ENCODE measurements at regions of chr2 and their contacts with region 1.

Region 1: GRCh38 chr2:37635504-37636380 is 35.7 kb downstream of the CDC42EP3 start:
- DNase-seq: peak; percentile 85
- ATAC-seq: peak; percentile 85
- H3K4me3 Mint-ChIP-seq: peak overlapping the region; percentile 33
- H3K27ac Mint-ChIP-seq: peak overlapping the region; percentile 83
- H3K4me1 Mint-ChIP-seq: peaks cover 65% of the 10 kb centered on the region
- H3K27me3 Mint-ChIP-seq: no peaks in the 10 kb centered on the region

Region 2: GRCh38 chr2:37570773-37571586 is 64.8 kb before region 1 on chr2:
- CTCF ChIA-PET with region 1: interaction called, 4 read pairs
- POLR2A ChIA-PET with region 1: no interaction called
- intact Hi-C with region 1: loop called (anchors 1 kb)
- DNase-seq: peak; percentile 83
- ATAC-seq: peak; percentile 92
- H3K4me3 Mint-ChIP-seq: no peak overlapping the region
- H3K27ac Mint-ChIP-seq: no peak overlapping the region
- H3K4me1 Mint-ChIP-seq: peaks cover 31% of the 10 kb centered on the region
- H3K27me3 Mint-ChIP-seq: no peaks in the 10 kb centered on the region

Region 3: DNA sequence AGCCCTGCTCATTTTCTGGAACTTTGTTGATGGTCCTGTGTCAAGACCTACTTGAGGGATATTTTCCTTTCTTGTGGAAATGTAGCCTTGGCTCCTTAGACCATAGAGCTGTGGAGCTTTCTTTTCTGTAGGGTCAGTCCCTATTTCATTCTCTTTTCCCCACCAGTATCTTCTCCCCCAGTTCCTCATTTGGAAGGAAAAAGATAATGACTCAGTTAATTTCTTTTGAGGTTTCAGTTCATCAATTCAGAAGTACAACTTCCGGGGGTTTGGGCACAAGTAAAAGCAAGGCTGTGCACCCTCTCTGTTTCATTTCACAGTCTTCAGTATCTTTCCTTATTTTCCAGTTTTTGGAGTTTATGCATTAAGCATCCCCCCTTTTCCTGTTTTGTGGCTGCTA is 35.0 kb before region 1 on chr2:
- CTCF ChIA-PET with region 1: no interaction called
- POLR2A ChIA-PET with region 1: no interaction called
- intact Hi-C with region 1: loop called in 1 of 2 experiments (anchors 5 kb)
- DNase-seq: peak; percentile 16
- ATAC-seq: peak; percentile 76
- H3K4me3 Mint-ChIP-seq: peak overlapping the region; percentile 58
- H3K27ac Mint-ChIP-seq: peak overlapping the region; percentile 5
- H3K4me1 Mint-ChIP-seq: peaks cover 47% of the 10 kb centered on the region
- H3K27me3 Mint-ChIP-seq: no peaks in the 10 kb centered on the region

Region 4: DNA sequence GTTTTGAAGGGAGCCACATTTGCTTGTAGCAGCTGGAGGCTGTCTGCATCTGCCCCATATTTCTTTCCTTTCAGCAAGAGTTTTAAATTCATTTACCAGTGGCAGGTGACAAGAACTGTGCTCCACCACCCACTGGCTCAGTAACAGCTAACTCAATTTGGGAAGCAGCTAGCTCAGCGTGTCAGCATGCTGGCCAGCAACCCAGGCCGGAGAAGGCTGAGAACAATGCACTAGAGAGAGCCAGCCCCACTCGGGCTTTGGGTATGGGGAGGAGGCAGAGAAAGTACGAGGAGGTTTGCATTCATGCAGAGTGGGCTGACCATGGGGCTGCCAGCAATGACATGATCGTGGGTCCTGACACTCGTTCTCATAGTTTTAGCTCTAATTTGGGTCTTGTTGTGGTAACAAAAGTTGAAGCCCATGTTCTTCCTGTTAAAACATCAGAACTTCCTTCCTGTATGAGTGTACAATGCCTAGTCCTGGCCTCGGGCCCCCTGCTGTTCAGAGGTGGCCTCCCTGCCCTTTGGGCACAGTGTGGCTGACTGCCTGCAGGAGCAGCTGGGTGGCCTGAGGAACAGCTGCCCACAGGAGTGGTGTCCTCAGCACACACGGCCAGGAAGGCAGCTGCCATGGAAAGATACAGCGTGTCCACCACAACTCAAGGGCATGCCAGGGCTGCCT is 12.7 kb after region 1 on chr2:
- CTCF ChIA-PET with region 1: interaction called, 4 read pairs
- POLR2A ChIA-PET with region 1: no interaction called
- intact Hi-C with region 1: loop called in 1 of 2 experiments (anchors 2 kb)
- DNase-seq: peak; percentile 58
- ATAC-seq: peak; percentile 77
- H3K4me3 Mint-ChIP-seq: no peak overlapping the region
- H3K27ac Mint-ChIP-seq: peak overlapping the region; percentile 88
- H3K4me1 Mint-ChIP-seq: peaks cover 89% of the 10 kb centered on the region
- H3K27me3 Mint-ChIP-seq: no peaks in the 10 kb centered on the region

Region 5: GRCh38 chr2:37683921-37684780 is 48.4 kb after region 1 on chr2:
- CTCF ChIA-PET with region 1: no interaction called
- POLR2A ChIA-PET with region 1: no interaction called
- intact Hi-C with region 1: loop called (anchors 1 to 2 kb)
- DNase-seq: no peak
- ATAC-seq: peak; percentile 95
- H3K4me3 Mint-ChIP-seq: peak overlapping the region; percentile 32
- H3K27ac Mint-ChIP-seq: peak overlapping the region; percentile 95
- H3K4me1 Mint-ChIP-seq: peaks cover 48% of the 10 kb centered on the region
- H3K27me3 Mint-ChIP-seq: no peaks in the 10 kb centered on the region

Region 6: GRCh38 chr2:38057651-38058410 is 422.1 kb after region 1 on chr2:
- CTCF ChIA-PET with region 1: no interaction called
- POLR2A ChIA-PET with region 1: no interaction called
- intact Hi-C with region 1: no loop called
- DNase-seq: peak; percentile 24
- ATAC-seq: peak; percentile 44
- H3K4me3 Mint-ChIP-seq: no peak overlapping the region
- H3K27ac Mint-ChIP-seq: no peak overlapping the region
- H3K4me1 Mint-ChIP-seq: peaks cover 21% of the 10 kb centered on the region
- H3K27me3 Mint-ChIP-seq: peaks cover 18% of the 10 kb centered on the region